ENCODE measurements at regions of chr9 and their contacts with region 1.

Region 1: DNA sequence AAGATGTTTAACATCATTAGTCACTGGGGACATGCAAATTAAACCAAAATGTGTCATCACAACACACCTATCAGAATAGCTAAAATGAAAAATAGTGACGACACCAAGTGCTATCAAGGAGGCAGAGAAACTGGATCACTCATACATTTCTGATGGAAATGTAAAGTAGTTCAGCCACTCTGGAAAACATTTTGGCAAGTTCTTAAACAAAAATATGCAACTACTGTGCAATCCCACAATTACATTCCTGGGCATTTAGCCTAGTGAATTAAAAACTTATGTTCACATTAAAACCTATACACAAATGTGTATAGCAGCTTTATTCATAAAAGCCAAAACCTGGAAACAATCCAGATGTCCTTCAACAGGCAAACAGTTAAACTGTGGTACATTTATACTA is 53.1 kb downstream of the SVEP1 start:
- DNase-seq: no peak
- H3K4me3 Mint-ChIP-seq: no peak overlapping the region
- H3K27ac Mint-ChIP-seq: no peak overlapping the region
- H3K4me1 Mint-ChIP-seq: no peaks in the 10 kb centered on the region
- H3K27me3 Mint-ChIP-seq: no peaks in the 10 kb centered on the region

Region 2: GRCh38 chr9:110399983-110400382 is 126.4 kb before region 1 on chr9:
- intact Hi-C with region 1: loop called (anchors 5 kb)
- DNase-seq: no peak
- H3K4me3 Mint-ChIP-seq: no peak overlapping the region
- H3K27ac Mint-ChIP-seq: no peak overlapping the region
- H3K4me1 Mint-ChIP-seq: no peaks in the 10 kb centered on the region
- H3K27me3 Mint-ChIP-seq: peaks cover 5% of the 10 kb centered on the region